Panc1 (cell line): ENCODE measurements at regions of chr5 and their contacts with region 1.

Region 1: DNA sequence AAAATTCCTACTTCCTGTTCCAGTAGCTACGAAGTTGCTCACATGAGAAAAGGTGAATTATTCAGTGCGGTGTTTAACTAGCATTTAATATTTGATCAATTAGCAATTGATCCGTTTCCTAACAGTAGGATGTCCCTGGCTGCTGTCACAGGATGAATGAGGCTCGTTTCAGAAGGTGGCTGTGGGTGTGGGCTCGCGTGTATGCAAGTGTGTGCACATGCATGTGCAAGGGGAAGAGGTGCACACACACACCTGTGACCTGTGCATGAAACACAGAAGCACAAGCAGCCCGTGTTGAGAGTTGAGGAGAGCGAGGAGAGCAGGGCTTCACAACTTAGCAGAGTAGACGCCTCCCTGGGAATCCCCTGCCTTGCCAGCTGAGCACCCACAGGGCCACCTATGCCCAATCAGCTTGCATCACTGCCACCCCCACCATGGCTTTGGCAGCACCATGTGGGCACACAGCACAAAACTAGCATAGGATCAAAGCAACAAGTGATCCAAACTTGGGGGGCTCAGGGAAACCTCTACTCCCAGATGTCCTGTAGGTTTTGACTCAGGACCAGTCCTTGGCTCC is 107.2 kb downstream of the C5orf15 start:
- DNase-seq: no peak
- ATAC-seq: no peak
- H3K4me3 ChIP-seq: no peak overlapping the region
- H3K27ac ChIP-seq: no peak overlapping the region
- H3K4me1 ChIP-seq: no peaks in the 10 kb centered on the region
- H3K27me3 ChIP-seq: no peaks in the 10 kb centered on the region
- CTCF ChIP-seq: no peak

Region 2: GRCh38 chr5:132926437-132926836 is 934.8 kb before region 1 on chr5:
- CTCF ChIA-PET with region 1: no interaction called
- POLR2A ChIA-PET with region 1: no interaction called
- in situ Hi-C with region 1: no loop called
- intact Hi-C with region 1: no loop called
- DNase-seq: no peak
- ATAC-seq: no peak
- H3K4me3 ChIP-seq: no peak overlapping the region
- H3K27ac ChIP-seq: no peak overlapping the region
- H3K4me1 ChIP-seq: no peaks in the 10 kb centered on the region
- H3K27me3 ChIP-seq: no peaks in the 10 kb centered on the region
- CTCF ChIP-seq: no peak

Region 3: DNA sequence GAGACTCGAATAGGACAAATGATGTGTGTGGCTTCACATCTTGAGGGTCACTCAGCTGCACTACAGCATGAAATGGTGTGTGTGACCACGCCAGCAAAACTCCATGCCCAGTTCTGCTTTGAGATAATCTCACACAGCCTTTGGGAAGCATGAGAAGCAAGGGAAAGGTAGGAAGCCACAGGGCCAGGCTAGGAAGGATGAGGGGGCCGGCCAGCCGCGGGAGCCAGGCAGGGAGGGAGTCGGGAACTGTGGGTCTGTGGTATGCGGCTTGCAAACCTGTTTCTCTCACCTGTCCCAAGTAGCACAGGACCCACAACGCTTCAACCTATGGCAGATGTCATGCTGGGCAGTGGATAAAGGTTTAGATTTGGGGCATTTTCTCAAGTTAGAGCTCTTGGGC is 667.5 kb before region 1 on chr5:
- CTCF ChIA-PET with region 1: interaction called, 12 read pairs
- POLR2A ChIA-PET with region 1: no interaction called
- in situ Hi-C with region 1: no loop called
- intact Hi-C with region 1: no loop called
- DNase-seq: no peak
- ATAC-seq: no peak
- H3K4me3 ChIP-seq: no peak overlapping the region
- H3K27ac ChIP-seq: no peak overlapping the region
- H3K4me1 ChIP-seq: no peaks in the 10 kb centered on the region
- H3K27me3 ChIP-seq: no peaks in the 10 kb centered on the region
- CTCF ChIP-seq: no peak

Region 4: DNA sequence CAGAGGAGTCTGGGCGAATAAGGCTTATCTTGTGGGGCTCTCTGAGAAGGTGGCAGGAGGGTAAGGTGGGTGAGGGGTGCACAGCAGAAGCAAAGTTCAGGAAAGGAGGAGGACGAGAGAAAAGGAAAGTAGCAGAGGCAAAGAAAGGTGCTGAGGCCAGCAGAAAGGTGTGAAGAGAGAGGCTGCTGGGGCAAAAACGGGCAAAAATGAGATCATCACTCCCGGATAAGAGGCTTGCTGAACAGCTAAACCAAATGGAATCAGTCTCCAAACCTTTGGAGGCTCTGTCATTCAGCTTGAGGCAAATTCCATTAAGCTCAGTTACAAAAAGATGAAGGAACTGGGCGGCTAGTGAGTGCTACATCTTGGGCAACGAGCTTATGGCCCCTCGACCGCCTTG is 385.3 kb before region 1 on chr5:
- CTCF ChIA-PET with region 1: interaction called, 11 read pairs
- POLR2A ChIA-PET with region 1: interaction called, 3 read pairs
- in situ Hi-C with region 1: no loop called
- intact Hi-C with region 1: no loop called
- DNase-seq: no peak
- ATAC-seq: no peak
- H3K4me3 ChIP-seq: no peak overlapping the region
- H3K27ac ChIP-seq: no peak overlapping the region
- H3K4me1 ChIP-seq: no peaks in the 10 kb centered on the region
- H3K27me3 ChIP-seq: peaks cover 20% of the 10 kb centered on the region
- CTCF ChIP-seq: no peak

Region 5: DNA sequence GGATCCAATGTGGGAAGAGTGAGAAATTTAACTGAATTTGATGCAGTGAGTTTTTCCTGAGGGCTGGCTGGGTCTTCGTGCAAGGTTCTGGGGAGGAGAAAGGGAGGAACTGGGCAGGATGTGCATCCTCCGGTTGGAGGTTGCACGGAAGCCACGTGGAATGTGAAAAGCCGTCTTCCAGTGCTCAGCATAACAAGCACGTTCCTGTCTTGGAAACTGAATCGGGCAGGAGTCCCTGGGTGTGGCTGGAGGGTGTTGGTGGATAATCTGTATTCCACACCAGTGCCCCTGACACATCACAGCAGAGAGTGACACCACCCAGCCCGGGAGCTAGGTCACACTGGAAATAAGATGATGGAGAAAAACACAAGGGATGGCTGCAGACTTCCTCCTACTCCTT is 47.1 kb before region 1 on chr5:
- CTCF ChIA-PET with region 1: no interaction called
- POLR2A ChIA-PET with region 1: no interaction called
- in situ Hi-C with region 1: no loop called
- intact Hi-C with region 1: no loop called
- DNase-seq: no peak
- ATAC-seq: no peak
- H3K4me3 ChIP-seq: no peak overlapping the region
- H3K27ac ChIP-seq: no peak overlapping the region
- H3K4me1 ChIP-seq: no peaks in the 10 kb centered on the region
- H3K27me3 ChIP-seq: peaks cover 12% of the 10 kb centered on the region
- CTCF ChIP-seq: no peak

Region 6: GRCh38 chr5:133848341-133848811 is 12.9 kb before region 1 on chr5:
- CTCF ChIA-PET with region 1: no interaction called
- POLR2A ChIA-PET with region 1: no interaction called
- in situ Hi-C with region 1: no loop called
- intact Hi-C with region 1: no loop called
- DNase-seq: no peak
- ATAC-seq: 0 out of 2 replicates have a peak, but pooled peaks have one; percentile 9
- H3K4me3 ChIP-seq: no peak overlapping the region
- H3K27ac ChIP-seq: no peak overlapping the region
- H3K4me1 ChIP-seq: no peaks in the 10 kb centered on the region
- H3K27me3 ChIP-seq: no peaks in the 10 kb centered on the region; the same call in 1 of the 2 replicates
- CTCF ChIP-seq: no peak

Region 7: GRCh38 chr5:133930061-133930812 is 69.0 kb after region 1 on chr5:
- CTCF ChIA-PET with region 1: no interaction called
- POLR2A ChIA-PET with region 1: no interaction called
- in situ Hi-C with region 1: no loop called
- intact Hi-C with region 1: no loop called
- DNase-seq: no peak
- ATAC-seq: no peak
- H3K4me3 ChIP-seq: no peak overlapping the region
- H3K27ac ChIP-seq: no peak overlapping the region
- H3K4me1 ChIP-seq: no peaks in the 10 kb centered on the region; the same call in 1 of the 2 replicates
- H3K27me3 ChIP-seq: no peaks in the 10 kb centered on the region
- CTCF ChIP-seq: no peak